Posterior vena cava (tissue), 2 donors: ENCODE measurements at regions of chr10 and their contacts with region 1.

Region 1: DNA sequence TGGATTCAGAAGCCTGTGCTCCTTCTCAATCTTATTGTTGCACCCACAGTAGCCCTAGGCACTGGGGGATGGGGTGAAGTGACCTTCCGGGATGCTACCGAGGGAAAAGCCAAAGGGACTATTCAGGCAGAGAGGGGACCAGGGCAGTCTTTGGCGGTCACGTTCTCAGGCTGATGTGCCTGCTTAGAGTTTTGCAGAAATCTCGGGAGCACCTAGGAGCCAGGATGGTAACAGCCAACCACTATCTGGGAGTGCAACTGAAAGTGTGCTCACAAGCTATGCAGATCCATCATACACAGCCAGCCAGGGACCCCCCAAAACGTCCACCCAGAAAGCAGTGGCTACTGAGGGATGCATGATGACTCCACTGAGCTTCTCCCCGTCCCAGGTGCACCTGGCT is 52.4 kb downstream of the CXCL12 start:
- DNase-seq: no peak

Region 2: GRCh38 chr10:43524434-43525247 is 807.8 kb before region 1 on chr10:
- intact Hi-C with region 1: no loop called
- DNase-seq: no peak

Region 3: GRCh38 chr10:43727935-43728334 is 604.5 kb before region 1 on chr10:
- intact Hi-C with region 1: loop called in 1 of 2 experiments (anchors 2 kb)
- DNase-seq: no peak

Region 4: GRCh38 chr10:44310762-44311562 is 21.5 kb before region 1 on chr10:
- intact Hi-C with region 1: no loop called
- DNase-seq: peak; percentile 96